Activated CD4-positive, alpha-beta memory T cell treated with anti-CD3 and anti-CD28 coated beads, Interleukin-2, amount 10 ng/mL, durations not matched to agents 7 days and 5 days (primary cell): ENCODE measurements at regions of chr11 and their contacts with region 1.

Region 1: GRCh38 chr11:18634140-18635032 is at the start of gene SPTY2D1:
- DNase-seq: peak; percentile 99
- H3K4me3 Mint-ChIP-seq: peak within 1 kb of the TSS; percentile 86
- H3K27ac Mint-ChIP-seq: peak within 1 kb of the TSS; percentile 92
- H3K4me1 Mint-ChIP-seq: peaks cover 23% of the 10 kb centered on the region
- H3K27me3 Mint-ChIP-seq: no peaks in the 10 kb centered on the region
- total RNA-seq, gene SPTY2D1: 30.8 to 32.8 TPM

Region 2: DNA sequence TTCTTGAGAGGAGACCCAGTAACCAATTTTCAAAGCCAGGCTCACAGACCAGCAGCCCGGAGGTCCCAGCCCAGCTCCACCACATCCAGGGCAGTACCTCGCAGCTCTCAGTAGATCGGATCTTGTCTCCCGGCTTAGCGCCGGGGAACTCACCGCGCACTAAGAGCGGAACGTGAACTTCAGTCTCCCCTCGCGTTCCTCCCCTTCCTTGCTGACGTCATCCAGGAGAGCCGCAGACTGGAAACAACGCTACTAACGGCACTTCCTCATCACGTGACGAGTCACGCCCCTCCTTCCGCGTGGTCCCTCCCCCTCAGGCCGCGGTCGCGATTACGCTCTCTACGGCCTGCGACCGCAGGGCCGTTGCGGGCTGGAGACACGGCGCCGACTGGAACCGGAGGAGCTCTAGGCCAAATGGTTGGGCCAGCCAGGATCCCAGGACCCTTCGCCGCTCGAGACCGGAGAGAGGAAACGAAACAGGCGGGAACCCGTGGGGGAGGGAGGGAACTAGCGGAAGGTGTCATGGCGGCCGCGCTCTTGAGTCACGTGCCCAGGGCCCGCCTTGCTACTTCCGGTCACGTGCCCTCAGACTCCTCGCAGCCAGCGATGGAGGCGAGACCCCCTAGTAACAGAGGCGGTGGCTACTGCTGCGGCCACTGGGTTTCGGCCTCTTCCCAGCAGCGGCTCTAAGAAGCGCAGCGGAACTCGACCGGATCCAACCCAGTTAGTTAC is 312.2 kb before region 1 on chr11 and contains the starts of genes GTF2H1 and HPS5:
- CTCF ChIA-PET with region 1: no interaction called
- POLR2A ChIA-PET with region 1: interaction called, 19 read pairs
- DNase-seq: peak; percentile 96
- H3K4me3 Mint-ChIP-seq: peak within 1 kb of the TSS; percentile 98
- H3K27ac Mint-ChIP-seq: peak within 1 kb of the TSS; percentile 96
- H3K4me1 Mint-ChIP-seq: peaks cover 65% of the 10 kb centered on the region
- H3K27me3 Mint-ChIP-seq: no peaks in the 10 kb centered on the region
- total RNA-seq, gene GTF2H1: 47.0 to 48.2 TPM
- total RNA-seq, gene HPS5: 20.3 to 22.6 TPM

Region 3: GRCh38 chr11:18578975-18579598 is 55.3 kb before region 1 on chr11:
- CTCF ChIA-PET with region 1: interaction called, 18 read pairs
- POLR2A ChIA-PET with region 1: interaction called, 40 read pairs
- DNase-seq: peak; percentile 40
- H3K4me3 Mint-ChIP-seq: peak overlapping the region; percentile 59
- H3K27ac Mint-ChIP-seq: peak overlapping the region; percentile 60
- H3K4me1 Mint-ChIP-seq: peaks cover 45% of the 10 kb centered on the region
- H3K27me3 Mint-ChIP-seq: no peaks in the 10 kb centered on the region

Region 4: GRCh38 chr11:18588297-18589252 is 45.8 kb before region 1 on chr11 and contains the start of gene UEVLD:
- CTCF ChIA-PET with region 1: interaction called, 4 read pairs
- POLR2A ChIA-PET with region 1: interaction called, 98 read pairs
- DNase-seq: peak; percentile 68
- H3K4me3 Mint-ChIP-seq: no peak within 1 kb of the TSS
- H3K27ac Mint-ChIP-seq: no peak within 1 kb of the TSS
- H3K4me1 Mint-ChIP-seq: peaks cover 2% of the 10 kb centered on the region
- H3K27me3 Mint-ChIP-seq: no peaks in the 10 kb centered on the region
- total RNA-seq, gene UEVLD: 23.3 to 26.1 TPM

Region 5: GRCh38 chr11:18615628-18616392 is 18.6 kb before region 1 on chr11:
- CTCF ChIA-PET with region 1: interaction called, 40 read pairs
- POLR2A ChIA-PET with region 1: interaction called, 211 read pairs
- DNase-seq: no peak
- H3K4me3 Mint-ChIP-seq: peak overlapping the region; percentile 12
- H3K27ac Mint-ChIP-seq: peak overlapping the region; percentile 57
- H3K4me1 Mint-ChIP-seq: peaks cover 52% of the 10 kb centered on the region
- H3K27me3 Mint-ChIP-seq: no peaks in the 10 kb centered on the region

Region 6: GRCh38 chr11:18650859-18651557 is 16.6 kb after region 1 on chr11:
- CTCF ChIA-PET with region 1: interaction called, 28 read pairs
- POLR2A ChIA-PET with region 1: interaction called, 23 read pairs
- DNase-seq: peak; percentile 62
- H3K4me3 Mint-ChIP-seq: no peak overlapping the region
- H3K27ac Mint-ChIP-seq: no peak overlapping the region
- H3K4me1 Mint-ChIP-seq: peaks cover 14% of the 10 kb centered on the region
- H3K27me3 Mint-ChIP-seq: no peaks in the 10 kb centered on the region